ENCODE measurements at regions of chr17 and their contacts with region 1.

Region 1: DNA sequence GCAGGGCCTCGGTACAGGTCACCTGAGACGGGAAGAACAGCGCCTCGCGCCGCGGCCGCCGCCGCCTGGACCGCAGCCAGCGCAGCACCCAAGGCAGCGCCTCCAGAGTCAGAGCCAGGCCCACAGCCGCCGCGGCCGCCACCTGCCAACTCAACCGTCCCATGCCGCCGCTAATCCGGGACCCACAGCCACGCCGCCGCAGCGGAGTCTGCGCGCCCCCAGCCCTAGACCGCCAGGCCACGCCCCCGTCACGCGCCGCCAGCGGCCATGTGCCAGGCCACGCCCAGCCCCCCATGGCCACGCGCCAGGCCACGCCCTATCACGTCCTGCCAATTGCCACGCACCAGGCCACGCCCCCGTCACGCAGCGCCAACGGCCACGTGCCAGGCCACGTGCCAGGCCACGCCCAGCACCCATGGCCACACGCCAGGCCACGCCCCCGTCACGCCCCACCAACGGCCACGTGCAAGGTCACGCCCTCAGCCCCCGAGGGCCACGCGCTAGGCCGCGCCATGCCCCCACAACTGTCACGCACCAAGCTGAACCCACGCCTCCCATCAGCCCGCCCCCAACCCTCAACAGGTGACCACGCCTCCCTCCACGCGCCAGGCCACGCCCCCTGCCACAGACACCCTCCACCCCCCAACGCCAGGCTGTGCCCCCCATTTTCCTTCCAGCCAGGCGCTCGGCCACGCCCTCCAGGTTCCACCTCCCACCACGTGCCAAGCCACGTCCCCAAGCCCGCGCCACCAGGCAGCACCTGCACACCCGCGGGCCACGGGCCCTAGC is at the start of gene PLD6:
- DNase-seq: peak; percentile 88 to 96 (median 93)
- ATAC-seq: peak; percentile 92
- H3K4me3 ChIP-seq: peak within 1 kb of the TSS; percentile 68
- H3K4me3 Mint-ChIP-seq: peak within 1 kb of the TSS; percentile 87 to 93 (median 89)
- H3K27ac ChIP-seq: peak within 1 kb of the TSS; percentile 70
- H3K27ac Mint-ChIP-seq: peak within 1 kb of the TSS; percentile 75 to 96 (median 91)
- H3K4me1 ChIP-seq: peaks cover 17 to 30% of the 10 kb centered on the region in 2 donors
- H3K4me1 Mint-ChIP-seq: peaks cover 12 to 32% (median 19%) of the 10 kb centered on the region in 7 donors
- H3K27me3 ChIP-seq: no peaks in the 10 kb centered on the region
- H3K27me3 Mint-ChIP-seq: no peaks in the 10 kb centered on the region
- total RNA-seq, gene PLD6: 6.2 to 13.9 (median 12.1) TPM

Region 2: DNA sequence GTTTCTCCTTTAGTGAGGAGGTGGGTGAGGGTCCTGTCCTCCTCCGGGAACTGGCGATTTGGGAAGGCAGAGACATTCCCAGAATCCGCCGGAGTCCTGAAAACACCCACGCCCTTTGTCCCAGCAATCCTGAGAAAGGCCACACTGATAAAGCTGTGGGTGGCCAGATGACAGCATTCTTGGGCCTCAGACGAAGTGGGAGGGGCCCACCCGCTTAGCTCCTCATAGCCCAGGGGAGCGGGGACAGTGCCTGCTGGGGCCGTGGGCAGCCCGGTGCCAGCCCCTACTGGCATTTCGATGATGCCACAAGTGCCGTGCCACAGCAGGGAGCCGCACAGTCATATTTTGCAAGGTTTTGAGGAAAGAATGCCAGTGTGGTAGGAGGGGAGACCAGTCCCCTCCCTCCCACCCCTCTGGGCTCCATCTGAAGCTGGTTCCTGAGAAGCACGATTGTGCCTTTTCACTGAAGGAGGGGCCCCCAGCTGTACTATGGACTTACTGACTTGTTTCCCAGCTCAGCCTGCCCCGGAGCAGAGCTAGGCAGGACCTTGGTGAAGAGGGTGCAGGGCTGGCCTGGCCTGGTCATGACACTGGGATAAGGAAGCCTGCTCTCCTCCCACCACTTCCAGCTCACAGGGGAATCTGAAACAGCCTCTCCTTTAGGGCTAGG is 185.0 kb before region 1 on chr17:
- CTCF ChIA-PET with region 1: no interaction called
- POLR2A ChIA-PET with region 1: no interaction called
- intact Hi-C with region 1: no loop called
- DNase-seq: no peak
- ATAC-seq: no peak
- H3K4me3 ChIP-seq: no peak overlapping the region
- H3K4me3 Mint-ChIP-seq: no peak overlapping the region
- H3K27ac ChIP-seq: no peak overlapping the region
- H3K27ac Mint-ChIP-seq: no peak overlapping the region
- H3K4me1 ChIP-seq: peaks cover 8 to 14% of the 10 kb centered on the region in 2 donors
- H3K4me1 Mint-ChIP-seq: peaks cover 15 to 19% (median 17%) of the 10 kb centered on the region in 7 donors
- H3K27me3 ChIP-seq: no peaks in the 10 kb centered on the region
- H3K27me3 Mint-ChIP-seq: no peaks in the 10 kb centered on the region

Region 3: GRCh38 chr17:17036524-17036998 is 169.8 kb before region 1 on chr17:
- CTCF ChIA-PET with region 1: no interaction called
- POLR2A ChIA-PET with region 1: no interaction called
- intact Hi-C with region 1: no loop called
- DNase-seq: no peak
- ATAC-seq: peak; percentile 88
- H3K4me3 ChIP-seq: no peak overlapping the region
- H3K4me3 Mint-ChIP-seq: no peak overlapping the region
- H3K27ac ChIP-seq: no peak overlapping the region
- H3K27ac Mint-ChIP-seq: no peak overlapping the region
- H3K4me1 ChIP-seq: peaks cover 1 to 5% of the 10 kb centered on the region in 2 donors
- H3K4me1 Mint-ChIP-seq: peaks cover 3 to 7% (median 5%) of the 10 kb centered on the region in 7 donors
- H3K27me3 ChIP-seq: no peaks in the 10 kb centered on the region
- H3K27me3 Mint-ChIP-seq: peaks cover 0 to 7% (median 0%) of the 10 kb centered on the region in 5 donors

Region 4: GRCh38 chr17:17141860-17142552 is 64.3 kb before region 1 on chr17:
- CTCF ChIA-PET with region 1: interaction called, 5 read pairs
- POLR2A ChIA-PET with region 1: no interaction called
- intact Hi-C with region 1: loop called in 1 of 2 experiments (anchors 5 kb)
- DNase-seq: peak; percentile 35 to 64 (median 54)
- ATAC-seq: peak; percentile 74
- H3K4me3 ChIP-seq: no peak overlapping the region
- H3K4me3 Mint-ChIP-seq: peak overlapping the region in 2 of 10 donors; percentile 2 to 3
- H3K27ac ChIP-seq: no peak overlapping the region
- H3K27ac Mint-ChIP-seq: peak overlapping the region in 7 of 9 donors; percentile 5 to 85 (median 63)
- H3K4me1 ChIP-seq: peaks cover 0 to 2% of the 10 kb centered on the region in 2 donors
- H3K4me1 Mint-ChIP-seq: peaks cover 8 to 24% (median 9%) of the 10 kb centered on the region in 7 donors
- H3K27me3 ChIP-seq: no peaks in the 10 kb centered on the region
- H3K27me3 Mint-ChIP-seq: no peaks in the 10 kb centered on the region

Region 5: DNA sequence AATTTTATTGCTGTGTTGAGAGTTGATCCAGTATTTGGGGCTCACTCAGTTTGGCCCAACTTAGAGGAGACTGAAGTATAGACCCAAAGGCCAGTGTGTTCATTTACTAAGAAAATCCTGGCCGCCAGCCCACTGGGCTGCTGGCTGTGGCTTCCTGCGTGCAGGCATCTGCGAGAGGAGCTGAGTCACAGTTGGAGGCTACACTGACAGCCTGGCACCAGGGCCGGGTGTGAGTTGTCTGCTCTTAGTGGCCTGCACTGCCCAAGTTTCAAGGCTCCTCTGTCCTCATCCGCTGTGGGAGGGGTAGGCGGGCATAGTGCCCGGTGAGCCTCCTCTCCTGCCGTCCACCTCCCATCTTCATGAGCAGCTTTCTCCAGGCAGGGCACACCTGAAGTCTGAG is 54.4 kb before region 1 on chr17:
- CTCF ChIA-PET with region 1: no interaction called
- POLR2A ChIA-PET with region 1: no interaction called
- intact Hi-C with region 1: loop called (anchors 1 to 10 kb)
- DNase-seq: no peak
- ATAC-seq: peak; percentile 66
- H3K4me3 ChIP-seq: no peak overlapping the region
- H3K4me3 Mint-ChIP-seq: peak overlapping the region in 3 of 10 donors; percentile 15 to 52 (median 27)
- H3K27ac ChIP-seq: no peak overlapping the region
- H3K27ac Mint-ChIP-seq: peak overlapping the region in 3 of 9 donors; percentile 28 to 78 (median 77)
- H3K4me1 ChIP-seq: peaks cover 13 to 40% of the 10 kb centered on the region in 2 donors
- H3K4me1 Mint-ChIP-seq: peaks cover 32 to 49% (median 41%) of the 10 kb centered on the region in 7 donors
- H3K27me3 ChIP-seq: no peaks in the 10 kb centered on the region
- H3K27me3 Mint-ChIP-seq: no peaks in the 10 kb centered on the region

Measured in naive thymus-derived CD4-positive, alpha-beta T cell (primary cell).